Activated T-helper 1 cell treated with anti-CD3 and anti-CD28 coated beads, Interleukin-12 subunit alpha, Interleukin-12 subunit beta, Interleukin-2, Interleukin-4 antibody, amounts not matched to agents 30 ng/mL and 10 ng/mL and 1 ng/mL, durations not matched to agents 14 hours and 24 hours and 36 hours (primary cell): ENCODE measurements at regions of chr17 and their contacts with region 1.

Region 1: DNA sequence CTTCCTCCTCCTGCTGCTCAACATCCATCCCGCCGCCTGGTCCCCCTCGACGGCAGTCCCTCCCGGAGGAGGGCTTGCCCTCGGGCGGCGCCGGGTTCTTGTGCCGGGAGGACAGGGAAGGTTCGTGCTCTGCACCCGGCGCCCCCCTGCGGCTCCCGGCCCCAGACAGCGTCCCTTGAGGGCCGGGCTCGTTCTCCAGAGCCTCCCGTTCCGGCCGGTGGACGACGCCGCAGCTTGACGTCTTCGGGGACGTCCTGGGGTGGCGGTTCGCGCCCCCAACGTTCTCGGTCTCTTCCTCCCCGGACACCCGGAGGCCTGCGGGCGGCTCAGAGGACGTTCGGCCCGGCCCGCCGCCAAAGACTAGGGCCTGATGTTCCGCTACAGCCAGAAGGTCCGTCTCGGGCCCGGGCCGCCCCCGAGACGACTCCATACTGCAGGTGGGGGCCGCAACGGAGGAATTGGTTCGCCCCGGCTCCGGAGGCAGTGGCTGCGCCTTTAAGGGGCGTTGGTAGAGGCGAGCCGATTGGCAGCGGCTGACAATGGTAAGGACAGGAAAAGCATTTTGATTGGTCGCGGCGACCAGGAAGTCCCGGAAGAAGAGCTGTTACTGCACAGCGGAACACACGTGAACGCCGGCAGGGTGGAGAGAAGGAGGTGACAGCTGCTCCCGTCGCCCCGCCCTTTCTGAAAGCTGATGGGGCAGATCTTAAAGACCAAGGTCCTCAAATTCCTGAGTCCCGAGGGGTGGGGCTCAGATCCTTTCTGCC is at the start of gene BORCS6:
- DNase-seq: peak; percentile 94
- H3K4me3 Mint-ChIP-seq: no peak within 1 kb of the TSS
- H3K27ac Mint-ChIP-seq: peak within 1 kb of the TSS; percentile 84
- H3K4me1 Mint-ChIP-seq: peaks cover 11% of the 10 kb centered on the region
- H3K27me3 Mint-ChIP-seq: no peaks in the 10 kb centered on the region
- total RNA-seq, gene BORCS6: 6.3 and 6.7 TPM in 2 replicates

Region 2: DNA sequence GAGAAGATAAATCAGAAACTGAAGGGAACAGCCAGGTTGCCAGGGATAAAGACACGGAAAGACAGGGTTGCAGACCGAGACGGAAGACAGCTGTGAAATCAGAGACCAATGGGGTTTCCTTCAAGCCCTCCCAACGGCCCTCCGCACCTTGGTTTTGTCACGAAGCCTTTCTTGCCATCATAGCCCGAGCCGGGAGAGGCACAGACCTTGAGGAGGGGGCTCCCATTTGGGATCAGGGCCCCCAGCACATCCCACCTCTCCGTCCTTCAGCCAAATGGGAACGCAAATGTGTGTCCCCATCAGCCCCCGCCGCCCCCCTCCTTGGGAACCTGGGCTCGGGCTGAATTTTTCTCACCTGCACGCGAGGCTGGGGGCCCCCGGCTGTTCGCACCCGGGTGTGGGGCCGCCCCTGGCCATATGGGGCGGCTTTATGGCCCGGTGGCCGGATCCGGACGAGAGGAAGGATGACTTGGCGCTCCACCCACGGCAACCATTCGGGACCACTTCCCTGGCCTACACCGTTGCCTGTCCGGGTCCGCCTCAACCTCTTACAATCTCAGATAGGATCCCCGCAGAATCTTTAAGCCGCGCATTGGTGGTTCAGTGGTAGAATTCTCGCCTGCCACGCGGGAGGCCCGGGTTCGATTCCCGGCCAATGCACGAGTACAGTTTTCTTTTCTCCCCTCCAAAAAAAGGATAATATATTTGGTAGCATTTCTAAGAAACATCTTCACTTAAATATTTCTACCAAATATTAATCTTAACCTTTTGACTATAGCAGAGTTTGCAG is 64.5 kb before region 1 on chr17:
- intact Hi-C with region 1: loop called (anchors 1 kb)
- DNase-seq: peak; percentile 79
- H3K4me3 Mint-ChIP-seq: peak overlapping the region; percentile 91
- H3K27ac Mint-ChIP-seq: peak overlapping the region; percentile 97
- H3K4me1 Mint-ChIP-seq: peaks cover 49% of the 10 kb centered on the region
- H3K27me3 Mint-ChIP-seq: peaks cover 52% of the 10 kb centered on the region

Region 3: GRCh38 chr17:8156246-8156992 is 33.5 kb before region 1 on chr17:
- intact Hi-C with region 1: loop called (anchors 1 kb)
- DNase-seq: peak; percentile 100
- H3K4me3 Mint-ChIP-seq: no peak overlapping the region
- H3K27ac Mint-ChIP-seq: no peak overlapping the region
- H3K4me1 Mint-ChIP-seq: peaks cover 56% of the 10 kb centered on the region
- H3K27me3 Mint-ChIP-seq: no peaks in the 10 kb centered on the region

Region 4: GRCh38 chr17:8173056-8173870 is 16.6 kb before region 1 on chr17:
- intact Hi-C with region 1: loop called (anchors 1 kb)
- DNase-seq: peak; percentile 76
- H3K4me3 Mint-ChIP-seq: peak overlapping the region; percentile 87
- H3K27ac Mint-ChIP-seq: peak overlapping the region; percentile 99
- H3K4me1 Mint-ChIP-seq: peaks cover 45% of the 10 kb centered on the region
- H3K27me3 Mint-ChIP-seq: peaks cover 2% of the 10 kb centered on the region

Region 5: DNA sequence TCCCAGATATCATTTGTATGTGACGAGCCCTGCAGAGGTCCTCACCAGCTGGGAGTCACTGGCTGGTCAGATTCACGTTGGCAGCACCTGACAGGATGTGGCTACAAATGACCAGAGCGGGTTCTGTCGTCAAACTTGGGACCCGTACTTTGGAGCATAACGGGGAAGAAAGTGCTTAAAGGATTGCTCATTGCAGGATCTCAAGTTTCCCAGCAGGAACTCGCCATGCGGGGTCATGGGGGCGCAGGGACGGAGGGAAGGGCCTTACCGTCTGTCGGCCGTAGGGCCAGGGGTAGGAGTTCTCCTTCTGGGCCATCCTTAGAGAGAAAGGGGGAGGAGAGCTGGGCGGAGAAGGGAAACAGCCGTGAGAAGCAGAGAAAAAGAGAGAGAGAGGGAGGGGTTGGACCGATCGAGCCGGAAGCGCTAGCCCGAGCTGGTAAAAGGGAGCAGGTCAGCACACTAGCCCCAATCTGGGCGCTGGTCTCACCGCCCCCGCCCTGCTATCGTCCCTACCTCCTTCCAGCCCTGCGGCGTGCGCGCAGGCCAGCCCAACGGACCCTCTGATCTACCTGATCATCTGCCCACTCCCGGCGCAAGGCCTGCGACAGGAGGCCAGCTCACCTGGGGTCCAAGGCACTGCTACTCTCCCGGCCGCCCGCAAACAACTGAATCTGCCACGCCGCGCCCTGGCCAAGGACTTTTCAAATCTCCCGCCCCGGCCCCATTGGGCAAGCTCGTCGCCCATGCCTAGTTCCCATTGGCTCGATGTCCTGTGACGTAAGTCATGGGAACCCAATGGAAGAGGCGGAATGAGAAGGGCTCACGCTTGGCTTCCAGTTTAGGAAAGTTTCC is 20.2 kb after region 1 on chr17 and contains the start of gene AURKB:
- intact Hi-C with region 1: loop called (anchors 1 kb)
- DNase-seq: peak; percentile 91
- H3K4me3 Mint-ChIP-seq: peak within 1 kb of the TSS; percentile 96
- H3K27ac Mint-ChIP-seq: peak within 1 kb of the TSS; percentile 94
- H3K4me1 Mint-ChIP-seq: peaks cover 34% of the 10 kb centered on the region
- H3K27me3 Mint-ChIP-seq: no peaks in the 10 kb centered on the region
- total RNA-seq, gene AURKB: 82.2 and 88.7 TPM in 2 replicates

Region 6: GRCh38 chr17:8288336-8289102 is 98.6 kb after region 1 on chr17 and contains the start of gene RANGRF:
- intact Hi-C with region 1: loop called (anchors 2 kb)
- DNase-seq: peak; percentile 85
- H3K4me3 Mint-ChIP-seq: peak within 1 kb of the TSS; percentile 86
- H3K27ac Mint-ChIP-seq: peak within 1 kb of the TSS; percentile 92
- H3K4me1 Mint-ChIP-seq: peaks cover 37% of the 10 kb centered on the region
- H3K27me3 Mint-ChIP-seq: no peaks in the 10 kb centered on the region
- total RNA-seq, gene RANGRF: 52.9 and 57.9 TPM in 2 replicates